ENCODE measurements at regions of chr12 and their contacts with region 1.

Region 1: GRCh38 chr12:118271790-118272417 is 100.8 kb downstream of the TAOK3 start:
- DNase-seq: no peak
- ATAC-seq: no peak
- H3K4me3 Mint-ChIP-seq: no peak overlapping the region
- H3K27ac Mint-ChIP-seq: no peak overlapping the region
- H3K4me1 Mint-ChIP-seq: peaks cover 15% of the 10 kb centered on the region
- H3K27me3 Mint-ChIP-seq: no peaks in the 10 kb centered on the region
- CTCF ChIP-seq: no peak

Region 2: GRCh38 chr12:118237052-118237665 is 34.7 kb before region 1 on chr12:
- CTCF ChIA-PET with region 1: no interaction called
- POLR2A ChIA-PET with region 1: no interaction called
- intact Hi-C with region 1: loop called (anchors 5 kb)
- DNase-seq: no peak
- ATAC-seq: peak; percentile 90
- H3K4me3 Mint-ChIP-seq: peak overlapping the region; percentile 77
- H3K27ac Mint-ChIP-seq: peak overlapping the region; percentile 89
- H3K4me1 Mint-ChIP-seq: peaks cover 45% of the 10 kb centered on the region
- H3K27me3 Mint-ChIP-seq: no peaks in the 10 kb centered on the region
- CTCF ChIP-seq: no peak

Measured in activated B cell treated with CpG ODN at 0.5 μM for 24 hours (primary cell).